PC-9 (cell line): ENCODE measurements at regions of chr9 and their contacts with region 1.

Region 1: DNA sequence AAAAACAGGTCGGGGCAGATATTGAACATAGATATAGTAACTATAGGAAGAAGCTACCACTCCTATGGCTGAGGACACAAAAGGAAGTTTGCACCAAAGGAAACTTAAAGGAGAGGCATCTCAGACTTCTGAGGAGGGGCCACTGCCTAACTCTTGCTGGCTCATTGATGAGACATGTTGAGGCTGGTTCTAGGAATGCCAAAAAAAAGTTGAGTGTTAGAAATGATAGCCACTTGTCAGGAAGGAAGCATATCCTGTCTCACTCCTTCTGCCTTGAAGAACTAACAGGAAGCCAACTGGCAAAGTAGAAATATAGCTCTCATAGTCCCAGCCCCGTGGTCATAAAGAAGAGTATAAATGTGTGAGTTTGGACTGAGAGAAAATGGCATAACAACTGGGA is 23.3 kb upstream of the STOM start:
- DNase-seq: no peak
- H3K4me3 ChIP-seq: no peak overlapping the region
- H3K27ac ChIP-seq: no peak overlapping the region
- H3K4me1 ChIP-seq: no peaks in the 10 kb centered on the region
- H3K27me3 ChIP-seq: no peaks in the 10 kb centered on the region
- CTCF ChIP-seq: no peak

Region 2: GRCh38 chr9:121107041-121107440 is 286.3 kb before region 1 on chr9:
- CTCF ChIA-PET with region 1: interaction called, 14 read pairs
- POLR2A ChIA-PET with region 1: no interaction called
- intact Hi-C with region 1: no loop called
- DNase-seq: no peak
- H3K4me3 ChIP-seq: no peak overlapping the region
- H3K27ac ChIP-seq: no peak overlapping the region
- H3K4me1 ChIP-seq: no peaks in the 10 kb centered on the region
- H3K27me3 ChIP-seq: no peaks in the 10 kb centered on the region
- CTCF ChIP-seq: 0 out of 2 replicates have a peak, but pooled peaks have one; percentile 25

Region 3: DNA sequence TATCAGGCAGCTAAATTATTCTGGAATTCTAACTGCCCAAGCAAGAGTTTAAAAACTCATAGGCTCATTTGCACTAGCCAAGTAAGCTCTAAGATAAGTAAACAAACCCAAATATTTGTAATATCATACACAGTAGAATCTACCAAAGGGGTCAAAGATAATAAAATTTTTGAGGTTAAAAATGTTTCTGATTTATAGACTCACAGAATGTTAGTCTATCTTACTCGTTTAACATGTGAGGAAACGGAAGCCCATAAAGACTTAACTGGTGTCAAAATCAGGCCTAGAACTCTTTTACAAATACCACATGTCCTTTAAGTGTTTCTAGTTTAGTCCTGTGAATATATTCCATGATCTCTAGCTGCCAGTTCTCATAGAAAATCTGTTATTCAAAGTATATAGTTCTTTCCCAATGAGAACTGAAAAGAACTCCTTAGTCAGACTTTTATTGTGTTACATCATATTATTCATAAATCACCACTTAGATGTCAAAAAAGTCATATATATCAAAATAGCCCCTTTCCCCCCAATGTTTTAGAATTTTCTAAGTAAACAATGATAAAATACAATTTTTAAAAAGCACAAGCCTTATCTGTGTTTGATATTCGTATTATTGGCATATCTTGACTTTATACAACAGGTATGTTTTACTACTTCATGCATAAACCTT is 205.5 kb before region 1 on chr9:
- CTCF ChIA-PET with region 1: interaction called, 24 read pairs
- POLR2A ChIA-PET with region 1: no interaction called
- intact Hi-C with region 1: no loop called
- DNase-seq: no peak
- H3K4me3 ChIP-seq: no peak overlapping the region
- H3K27ac ChIP-seq: no peak overlapping the region
- H3K4me1 ChIP-seq: peaks cover 15% of the 10 kb centered on the region
- H3K27me3 ChIP-seq: no peaks in the 10 kb centered on the region
- CTCF ChIP-seq: no peak

Region 4: GRCh38 chr9:121483049-121483448 is 89.7 kb after region 1 on chr9:
- CTCF ChIA-PET with region 1: no interaction called
- POLR2A ChIA-PET with region 1: no interaction called
- intact Hi-C with region 1: no loop called
- DNase-seq: peak; percentile 32 to 58
- H3K4me3 ChIP-seq: no peak overlapping the region
- H3K27ac ChIP-seq: no peak overlapping the region
- H3K4me1 ChIP-seq: no peaks in the 10 kb centered on the region
- H3K27me3 ChIP-seq: no peaks in the 10 kb centered on the region
- CTCF ChIP-seq: no peak